GM12878 (cell line): ENCODE measurements at regions of chr7 and their contacts with region 1.

Region 1: GRCh38 chr7:73683056-73683964 is at the starts of genes BUD23 and DNAJC30:
- DNase-seq: peak; percentile 71
- ATAC-seq: peak; percentile 98
- H3K4me3 ChIP-seq: peak within 1 kb of the TSS; percentile 91
- H3K27ac ChIP-seq: peak within 1 kb of the TSS; percentile 81
- H3K4me1 ChIP-seq: peaks cover 15% of the 10 kb centered on the region
- H3K27me3 ChIP-seq: no peaks in the 10 kb centered on the region
- CTCF ChIP-seq: no peak
- EP300 ChIP-seq: no peak
- POLR2A ChIP-seq: peak; percentile 97
- RAD21 ChIP-seq: no peak
- polyA plus RNA-seq, gene BUD23: 36.4 to 89.9 TPM
- polyA plus RNA-seq, gene DNAJC30: 2.1 to 3.5 TPM

Region 2: DNA sequence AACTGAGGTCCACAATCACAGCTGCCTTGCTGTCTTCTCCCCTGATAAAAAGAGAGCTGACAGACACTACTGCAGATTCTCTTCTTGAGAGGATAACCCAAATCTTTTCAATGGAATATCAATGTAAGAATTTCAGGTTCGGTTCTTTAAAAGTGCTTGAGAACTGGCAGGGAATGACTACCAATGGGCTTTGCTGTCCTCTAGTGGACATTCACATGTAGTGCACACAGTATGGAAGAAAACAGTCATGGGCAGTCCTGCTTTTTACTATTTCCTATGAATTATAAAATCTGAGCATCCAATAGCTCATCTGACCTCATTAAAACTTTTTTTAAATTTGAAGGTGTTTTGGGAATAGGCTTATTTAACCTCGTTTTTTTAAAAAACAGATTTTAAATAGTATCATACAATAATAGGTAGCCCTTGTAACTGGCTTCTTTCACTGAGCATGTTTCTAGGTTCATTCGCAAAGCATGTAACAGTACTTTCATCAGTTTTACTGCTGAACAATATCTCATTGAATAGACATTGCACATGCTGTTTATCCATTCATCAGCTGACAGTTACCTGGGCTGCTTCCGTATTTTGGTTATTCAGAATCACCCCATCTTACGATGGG is 231.4 kb before region 1 on chr7:
- CTCF ChIA-PET with region 1: no interaction called
- POLR2A ChIA-PET with region 1: no interaction called
- RAD21 ChIA-PET with region 1: no interaction called
- SMC1A ChIA-PET with region 1: no interaction called
- in situ Hi-C with region 1: no loop called
- intact Hi-C with region 1: no loop called
- DNase-seq: peak; percentile 9
- ATAC-seq: peak; percentile 83
- H3K4me3 ChIP-seq: no peak overlapping the region
- H3K27ac ChIP-seq: no peak overlapping the region
- H3K4me1 ChIP-seq: no peaks in the 10 kb centered on the region
- H3K27me3 ChIP-seq: no peaks in the 10 kb centered on the region
- CTCF ChIP-seq: peak; percentile 97 to 98 (median 97)
- EP300 ChIP-seq: no peak
- POLR2A ChIP-seq: no peak
- RAD21 ChIP-seq: peak; percentile 96

Region 3: GRCh38 chr7:73701357-73701995 is 18.2 kb after region 1 on chr7:
- CTCF ChIA-PET with region 1: no interaction called
- POLR2A ChIA-PET with region 1: no interaction called
- RAD21 ChIA-PET with region 1: no interaction called
- SMC1A ChIA-PET with region 1: no interaction called
- in situ Hi-C with region 1: no loop called
- intact Hi-C with region 1: no loop called
- DNase-seq: no peak
- ATAC-seq: peak; percentile 70
- H3K4me3 ChIP-seq: no peak overlapping the region
- H3K27ac ChIP-seq: no peak overlapping the region
- H3K4me1 ChIP-seq: no peaks in the 10 kb centered on the region
- H3K27me3 ChIP-seq: no peaks in the 10 kb centered on the region
- CTCF ChIP-seq: peak; percentile 31 to 70 (median 61); a peak in 5 of 6 replicates
- EP300 ChIP-seq: no peak
- POLR2A ChIP-seq: no peak
- RAD21 ChIP-seq: peak; percentile 10; the same call in 1 of the 2 replicates

Region 4: GRCh38 chr7:73718905-73719805 is 35.8 kb after region 1 on chr7 and contains the start of gene STX1A:
- CTCF ChIA-PET with region 1: interaction called, 3 read pairs
- POLR2A ChIA-PET with region 1: interaction called, 3 read pairs
- RAD21 ChIA-PET with region 1: no interaction called
- SMC1A ChIA-PET with region 1: no interaction called
- in situ Hi-C with region 1: no loop called
- intact Hi-C with region 1: loop called (anchors 2 kb)
- DNase-seq: no peak
- ATAC-seq: peak; percentile 86
- H3K4me3 ChIP-seq: peak within 1 kb of the TSS; percentile 87
- H3K27ac ChIP-seq: no peak within 1 kb of the TSS
- H3K4me1 ChIP-seq: peaks cover 12% of the 10 kb centered on the region
- H3K27me3 ChIP-seq: no peaks in the 10 kb centered on the region
- CTCF ChIP-seq: no peak
- EP300 ChIP-seq: no peak
- POLR2A ChIP-seq: peak; percentile 62; the same call in 1 of the 2 replicates
- RAD21 ChIP-seq: no peak
- polyA plus RNA-seq, gene STX1A: 0.15 to 0.21 TPM